ENCODE measurements at regions of chr11 and their contacts with region 1.

Region 1: GRCh38 chr11:61007591-61008478 is 36.4 kb downstream of the CD6 start:
- DNase-seq: no peak
- H3K4me3 ChIP-seq: peak overlapping the region in 1 of 3 experiments; percentile 11
- H3K27ac ChIP-seq: no peak overlapping the region
- H3K4me1 ChIP-seq: peaks cover 8% of the 10 kb centered on the region
- H3K27me3 ChIP-seq: peaks cover 2% of the 10 kb centered on the region
- CTCF ChIP-seq: no peak

Region 2: DNA sequence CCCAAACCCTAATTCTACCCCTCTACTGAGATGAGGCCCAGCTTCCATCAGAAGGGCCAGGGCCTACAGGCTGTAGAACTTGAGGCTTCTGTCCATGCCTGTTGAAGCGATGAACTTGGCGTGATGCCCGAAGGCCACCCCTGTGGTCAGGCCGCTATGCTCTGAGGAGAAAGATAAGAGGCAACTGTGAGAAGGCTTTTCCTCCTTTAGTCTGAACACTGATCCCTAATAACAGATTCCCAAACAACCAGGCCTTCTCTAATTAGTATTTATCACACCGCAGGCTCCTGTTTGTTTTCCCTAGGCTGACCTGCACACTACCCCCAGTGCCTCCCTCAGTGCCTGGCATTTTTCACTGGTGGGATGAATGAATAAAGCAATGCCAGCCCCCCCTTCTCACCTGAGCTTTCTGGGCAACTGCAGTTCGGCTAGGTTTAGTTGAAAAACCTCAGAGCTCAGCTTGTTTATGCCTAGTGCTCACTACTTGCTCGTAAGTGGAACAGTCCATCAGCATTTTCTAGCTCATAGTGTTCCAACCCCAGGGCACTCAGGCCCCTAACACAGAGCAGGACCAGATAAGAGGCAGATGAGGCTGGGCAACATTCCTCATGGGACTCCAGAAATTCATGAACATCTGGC is 116.6 kb before region 1 on chr11:
- CTCF ChIA-PET with region 1: no interaction called
- dilution Hi-C with region 1: no loop called
- in situ Hi-C with region 1: no loop called
- intact Hi-C with region 1: no loop called
- DNase-seq: no peak
- H3K4me3 ChIP-seq: no peak overlapping the region
- H3K27ac ChIP-seq: no peak overlapping the region
- H3K4me1 ChIP-seq: no peaks in the 10 kb centered on the region
- H3K27me3 ChIP-seq: no peaks in the 10 kb centered on the region
- CTCF ChIP-seq: no peak

Region 3: DNA sequence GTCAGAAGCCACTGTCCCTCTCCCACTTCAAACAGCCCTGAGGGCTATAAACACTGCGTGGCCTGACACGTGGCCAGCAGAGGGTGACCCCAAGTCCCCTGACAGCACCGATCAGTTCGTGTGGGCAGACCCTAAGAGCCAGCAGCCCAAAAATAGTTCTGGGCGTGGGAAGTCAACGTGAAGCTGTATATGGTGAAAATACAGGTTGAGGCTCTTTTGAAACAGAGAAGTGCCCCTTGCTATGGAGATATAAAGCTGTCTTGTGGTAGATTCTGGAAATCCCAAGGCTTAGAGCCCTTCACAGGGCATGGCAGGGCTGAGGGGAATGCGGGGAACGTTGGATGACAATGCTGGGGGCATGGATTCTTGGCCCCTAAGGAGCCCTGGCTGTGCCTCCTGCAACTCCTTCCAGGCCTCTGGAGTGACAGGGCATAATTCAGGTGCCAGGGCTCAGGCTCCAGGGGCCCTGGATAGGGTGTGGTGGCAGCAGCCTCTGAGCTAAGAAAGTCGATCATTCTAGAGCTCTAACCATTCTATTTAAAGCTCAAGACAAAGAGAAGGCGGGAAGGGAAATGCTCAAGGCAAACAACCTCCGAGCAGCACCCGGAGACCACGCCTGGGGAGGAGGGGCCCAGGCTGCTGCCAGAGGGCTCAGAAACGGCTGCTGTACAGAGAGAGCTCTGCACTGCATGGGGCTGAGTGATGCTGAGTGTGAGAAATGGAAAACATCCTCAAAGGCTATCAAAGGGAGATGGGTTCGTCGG is 34.1 kb after region 1 on chr11:
- CTCF ChIA-PET with region 1: no interaction called
- dilution Hi-C with region 1: loop called (anchors 5 kb)
- in situ Hi-C with region 1: no loop called
- intact Hi-C with region 1: no loop called
- DNase-seq: no peak
- H3K4me3 ChIP-seq: no peak overlapping the region
- H3K27ac ChIP-seq: no peak overlapping the region
- H3K4me1 ChIP-seq: peaks cover 7% of the 10 kb centered on the region
- H3K27me3 ChIP-seq: no peaks in the 10 kb centered on the region
- CTCF ChIP-seq: no peak

Region 4: DNA sequence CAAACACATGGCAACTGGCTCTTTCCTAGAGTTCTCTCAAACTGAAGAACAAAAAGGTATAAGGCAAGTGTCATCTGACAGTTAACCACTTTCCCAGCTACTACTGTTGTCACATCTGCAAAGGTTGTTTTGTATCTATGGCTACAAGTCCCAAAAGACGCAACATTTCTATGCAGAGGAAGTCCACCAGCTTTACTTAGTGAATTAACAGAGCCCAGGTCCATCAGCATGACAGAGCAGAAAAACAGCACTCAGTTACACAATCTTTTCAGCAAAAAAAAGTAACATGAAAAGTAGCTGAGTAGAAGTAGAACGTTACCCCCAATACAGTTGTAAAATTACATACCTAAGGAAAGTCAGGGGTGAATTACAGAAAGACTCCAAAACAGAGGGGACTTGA is 409.8 kb after region 1 on chr11:
- CTCF ChIA-PET with region 1: no interaction called
- dilution Hi-C with region 1: no loop called
- in situ Hi-C with region 1: no loop called
- intact Hi-C with region 1: no loop called
- DNase-seq: no peak
- H3K4me3 ChIP-seq: no peak overlapping the region
- H3K27ac ChIP-seq: no peak overlapping the region
- H3K4me1 ChIP-seq: no peaks in the 10 kb centered on the region
- H3K27me3 ChIP-seq: no peaks in the 10 kb centered on the region
- CTCF ChIP-seq: no peak